ENCODE measurements at regions of chr18 and their contacts with region 1.

Region 1: GRCh38 chr18:54119524-54120019 is 104.9 kb downstream of the MBD2 start:
- DNase-seq: peak; percentile 2 to 51
- H3K4me3 ChIP-seq: no peak overlapping the region
- H3K27ac ChIP-seq: no peak overlapping the region
- H3K4me1 ChIP-seq: no peaks in the 10 kb centered on the region
- H3K27me3 ChIP-seq: no peaks in the 10 kb centered on the region
- CTCF ChIP-seq: peak; percentile 86

Region 2: DNA sequence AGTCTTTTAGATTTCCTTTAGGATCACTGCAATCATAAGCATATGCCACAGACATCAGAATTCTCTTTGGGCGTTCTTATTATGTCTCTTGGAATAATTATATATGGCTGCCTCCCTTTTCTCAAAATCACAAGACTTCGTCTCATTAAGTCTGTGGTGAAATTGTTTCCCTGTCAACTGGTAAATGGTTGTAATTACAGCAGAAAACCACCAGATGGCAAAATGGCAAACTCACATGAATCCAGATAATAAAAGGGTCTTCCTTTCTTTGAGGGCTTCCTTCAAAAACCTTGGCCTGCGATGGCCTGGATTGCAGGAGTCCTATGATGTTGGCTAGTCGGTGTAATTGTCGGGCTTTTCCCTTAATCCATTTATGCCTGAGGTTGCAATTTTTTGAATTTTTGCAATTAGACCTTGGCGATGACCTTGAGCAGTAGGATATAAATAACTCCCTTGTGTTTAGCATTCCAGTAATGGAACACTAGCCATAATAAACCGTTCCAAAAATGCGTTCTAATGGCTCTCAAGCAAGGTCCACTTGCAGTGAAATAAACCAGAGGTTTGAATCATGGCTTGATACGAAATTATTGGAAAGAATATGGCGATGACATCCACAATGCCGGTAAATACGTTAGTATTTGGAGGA is 551.5 kb before region 1 on chr18:
- CTCF ChIA-PET with region 1: no interaction called
- POLR2A ChIA-PET with region 1: no interaction called
- intact Hi-C with region 1: loop called (anchors 1 kb)
- DNase-seq: no peak
- H3K4me3 ChIP-seq: no peak overlapping the region
- H3K27ac ChIP-seq: no peak overlapping the region
- H3K4me1 ChIP-seq: no peaks in the 10 kb centered on the region
- H3K27me3 ChIP-seq: no peaks in the 10 kb centered on the region
- CTCF ChIP-seq: peak; percentile 80

Region 3: GRCh38 chr18:53698907-53699306 is 420.7 kb before region 1 on chr18:
- CTCF ChIA-PET with region 1: no interaction called
- POLR2A ChIA-PET with region 1: no interaction called
- intact Hi-C with region 1: loop called (anchors 5 kb)
- DNase-seq: peak in 1 of 2 experiments; percentile 3
- H3K4me3 ChIP-seq: no peak overlapping the region
- H3K27ac ChIP-seq: no peak overlapping the region
- H3K4me1 ChIP-seq: no peaks in the 10 kb centered on the region
- H3K27me3 ChIP-seq: no peaks in the 10 kb centered on the region; the same call in 1 of the 2 replicates
- CTCF ChIP-seq: peak; percentile 56

Region 4: DNA sequence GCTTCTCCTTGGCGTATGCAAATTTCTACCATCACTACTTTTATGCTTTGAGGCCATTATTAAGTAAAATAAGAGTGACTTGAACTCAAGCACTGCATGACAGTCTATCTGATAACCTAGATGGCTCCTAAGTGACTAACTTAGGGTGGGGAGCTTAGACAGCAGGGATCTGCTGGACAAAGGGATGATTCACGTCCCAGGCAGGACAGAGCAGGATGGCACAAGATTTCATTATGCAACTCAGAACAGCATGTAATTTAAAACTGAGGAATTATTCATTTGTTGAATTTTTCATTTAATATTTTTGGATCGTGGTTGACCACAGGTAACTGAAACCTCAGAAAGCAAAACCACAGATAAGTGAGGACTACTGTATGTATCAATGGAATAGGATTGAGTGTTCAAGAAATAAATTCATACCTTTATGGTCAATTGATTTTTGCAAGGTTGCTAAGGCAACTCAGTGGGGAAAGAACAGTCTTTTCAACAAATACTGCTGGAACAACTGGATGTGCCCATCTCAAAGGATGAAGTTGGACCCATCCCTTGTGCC is 10.4 kb before region 1 on chr18:
- CTCF ChIA-PET with region 1: no interaction called
- POLR2A ChIA-PET with region 1: no interaction called
- intact Hi-C with region 1: no loop called
- DNase-seq: no peak
- H3K4me3 ChIP-seq: no peak overlapping the region
- H3K27ac ChIP-seq: no peak overlapping the region
- H3K4me1 ChIP-seq: no peaks in the 10 kb centered on the region
- H3K27me3 ChIP-seq: no peaks in the 10 kb centered on the region
- CTCF ChIP-seq: no peak

Region 5: GRCh38 chr18:54217624-54218023 is 98.1 kb after region 1 on chr18:
- CTCF ChIA-PET with region 1: no interaction called
- POLR2A ChIA-PET with region 1: no interaction called
- intact Hi-C with region 1: no loop called
- DNase-seq: no peak
- H3K4me3 ChIP-seq: no peak overlapping the region
- H3K27ac ChIP-seq: no peak overlapping the region
- H3K4me1 ChIP-seq: peaks cover 21% of the 10 kb centered on the region
- H3K27me3 ChIP-seq: no peaks in the 10 kb centered on the region
- CTCF ChIP-seq: no peak